WTC11 (cell line): ENCODE measurements at regions of chr10 and their contacts with region 1.

Region 1: DNA sequence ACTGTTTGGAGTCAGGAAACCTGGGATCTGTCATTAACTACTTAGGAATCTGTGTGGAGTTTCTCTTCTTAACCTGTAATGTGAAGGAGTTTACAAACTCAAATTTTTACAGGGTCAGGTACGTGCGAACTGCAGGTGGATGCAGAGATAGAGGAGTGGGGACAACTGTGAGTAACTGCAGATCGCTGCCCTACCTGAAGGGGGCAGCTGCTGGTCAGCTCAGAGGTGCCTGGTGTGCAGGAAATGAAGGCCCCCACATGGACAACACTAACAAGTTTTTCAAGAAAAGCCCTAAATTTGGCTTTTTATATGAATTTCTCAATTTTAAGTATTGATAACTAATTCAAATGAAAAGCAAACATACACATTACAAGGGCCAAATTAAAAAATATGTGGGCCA is 380.0 kb downstream of the REEP3 start:
- DNase-seq: peak; percentile 55
- ATAC-seq: peak; percentile 99
- H3K4me3 Mint-ChIP-seq: no peak overlapping the region
- H3K27ac Mint-ChIP-seq: no peak overlapping the region
- H3K4me1 Mint-ChIP-seq: peaks cover 3% of the 10 kb centered on the region; the same call in 1 of the 2 replicates
- H3K27me3 Mint-ChIP-seq: no peaks in the 10 kb centered on the region
- CTCF ChIP-seq: peak; percentile 79

Region 2: DNA sequence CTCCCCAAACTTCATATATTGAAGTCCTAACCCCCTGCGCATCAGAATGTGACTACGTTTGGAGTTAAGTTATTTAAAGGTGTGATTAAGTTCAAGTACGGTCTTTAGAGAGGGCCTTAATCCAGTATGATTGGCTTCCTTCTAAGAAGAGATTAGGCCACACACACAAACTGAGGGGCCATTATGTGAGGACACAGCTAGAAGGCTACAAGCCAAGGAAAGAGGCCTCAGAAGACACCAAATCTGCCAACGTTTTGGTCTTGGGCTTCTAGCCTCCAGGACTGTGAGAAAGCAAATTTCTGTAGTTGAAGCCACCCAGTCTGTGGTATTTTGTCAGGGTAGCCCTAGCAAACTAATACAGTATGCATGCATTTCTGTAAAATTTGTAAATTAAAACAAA is 338.4 kb before region 1 on chr10:
- CTCF ChIA-PET with region 1: no interaction called
- POLR2A ChIA-PET with region 1: no interaction called
- DNase-seq: no peak
- ATAC-seq: peak; percentile 43; the same call in 1 of the 2 replicates
- H3K4me3 Mint-ChIP-seq: no peak overlapping the region
- H3K27ac Mint-ChIP-seq: peak overlapping the region; percentile 46; the same call in 1 of the 2 replicates
- H3K4me1 Mint-ChIP-seq: peaks cover 18% of the 10 kb centered on the region
- H3K27me3 Mint-ChIP-seq: no peaks in the 10 kb centered on the region
- CTCF ChIP-seq: no peak

Region 3: DNA sequence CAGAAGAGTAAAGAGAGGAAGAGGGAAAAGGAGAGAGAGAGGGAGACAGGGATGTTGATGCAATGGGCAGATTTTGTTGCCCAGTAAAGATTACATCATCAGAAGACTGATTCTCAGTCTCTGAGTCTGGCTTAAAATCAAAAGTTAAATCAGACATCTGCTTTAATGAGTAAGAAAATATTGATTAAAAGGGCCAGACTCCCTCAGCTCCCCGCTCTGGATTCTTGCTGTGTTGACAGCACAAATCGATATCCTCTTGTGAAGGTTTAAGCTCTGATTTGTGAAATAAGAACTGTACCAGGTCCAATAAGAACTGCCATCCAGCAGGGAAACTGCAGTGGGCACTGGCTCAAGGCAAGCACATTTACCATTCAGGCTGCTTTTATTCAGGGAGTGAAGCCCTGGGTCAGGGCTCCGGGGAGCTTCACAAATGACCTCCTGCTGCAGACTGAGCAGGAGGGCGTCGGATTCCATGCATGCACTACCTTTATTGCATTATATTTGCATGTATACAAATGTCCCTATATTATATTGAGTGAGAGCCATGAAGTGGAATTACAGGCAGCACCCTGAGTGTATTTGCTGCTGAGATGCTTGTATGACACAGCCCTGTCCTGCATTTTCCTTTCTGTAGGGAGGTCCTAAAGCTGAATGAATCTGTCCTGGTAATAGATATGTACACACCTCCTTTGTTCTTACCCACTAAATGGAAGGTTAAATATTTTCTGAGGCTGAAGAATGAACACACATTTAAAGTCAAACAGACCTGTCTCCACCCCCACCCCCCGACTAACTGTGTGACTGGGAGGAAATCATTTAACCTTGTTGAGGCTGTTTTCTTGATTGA is 21.5 kb after region 1 on chr10:
- CTCF ChIA-PET with region 1: interaction called, 23 read pairs
- POLR2A ChIA-PET with region 1: no interaction called
- DNase-seq: no peak
- ATAC-seq: peak; percentile 69
- H3K4me3 Mint-ChIP-seq: no peak overlapping the region
- H3K27ac Mint-ChIP-seq: peak overlapping the region; percentile 6; the same call in 1 of the 2 replicates
- H3K4me1 Mint-ChIP-seq: peaks cover 36% of the 10 kb centered on the region
- H3K27me3 Mint-ChIP-seq: peaks cover 6% of the 10 kb centered on the region
- CTCF ChIP-seq: no peak

Region 4: GRCh38 chr10:64067009-64067606 is 165.9 kb after region 1 on chr10:
- CTCF ChIA-PET with region 1: no interaction called
- POLR2A ChIA-PET with region 1: no interaction called
- DNase-seq: no peak
- ATAC-seq: no peak
- H3K4me3 Mint-ChIP-seq: no peak overlapping the region
- H3K27ac Mint-ChIP-seq: no peak overlapping the region
- H3K4me1 Mint-ChIP-seq: peaks cover 11% of the 10 kb centered on the region
- H3K27me3 Mint-ChIP-seq: no peaks in the 10 kb centered on the region
- CTCF ChIP-seq: no peak